ENCODE measurements at regions of chr2 and their contacts with region 1.

Region 1: DNA sequence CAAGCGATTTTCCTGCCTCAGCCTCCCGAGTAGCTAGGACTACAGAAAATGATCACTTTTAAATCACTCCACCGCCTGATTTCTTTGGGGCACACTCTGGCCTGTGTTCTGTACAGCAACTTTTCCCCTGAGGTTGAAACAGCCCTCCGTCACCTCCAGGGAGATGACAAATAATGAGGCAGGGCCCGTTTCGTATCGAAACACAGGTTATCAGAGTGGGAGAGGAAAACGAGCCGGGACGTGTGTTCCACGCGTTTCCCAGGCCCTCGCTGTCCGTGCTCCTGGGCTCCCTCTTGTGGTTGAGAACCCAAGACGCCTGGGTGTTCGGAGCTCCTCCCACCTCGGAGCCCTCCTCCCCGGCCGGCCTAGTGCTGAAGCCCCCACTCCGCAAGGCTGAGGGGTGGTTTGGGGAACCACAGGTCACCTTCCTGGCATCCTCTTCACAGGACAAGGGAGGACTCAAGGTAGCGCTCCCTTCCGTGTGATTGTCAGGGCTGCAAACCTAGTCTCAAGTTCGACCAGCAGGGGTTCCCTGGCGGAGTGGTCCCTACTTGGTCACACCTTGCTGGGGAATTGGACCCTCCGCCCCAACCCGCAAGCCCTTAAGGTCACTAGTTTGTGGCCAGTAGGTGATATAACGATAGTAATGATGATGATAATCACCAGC is 12.8 kb downstream of the ATP6V1B1 start:
- DNase-seq: peak; percentile 78
- H3K4me3 ChIP-seq: peak overlapping the region in 2 of 3 experiments; percentile 26 to 36
- H3K27ac ChIP-seq: no peak overlapping the region
- H3K4me1 ChIP-seq: peaks cover 13% of the 10 kb centered on the region
- H3K27me3 ChIP-seq: peaks cover 4 to 9% of the 10 kb centered on the region in 2 experiments
- CTCF ChIP-seq: peak; percentile 90 to 94
- POLR2A ChIP-seq: no peak

Region 2: GRCh38 chr2:70301344-70302194 is 646.9 kb before region 1 on chr2 and contains the start of gene FAM136A:
- CTCF ChIA-PET with region 1: interaction called, 26 read pairs
- POLR2A ChIA-PET with region 1: no interaction called
- dilution Hi-C with region 1: no loop called
- intact Hi-C with region 1: loop called (anchors 5 kb)
- DNase-seq: peak; percentile 80
- H3K4me3 ChIP-seq: peak within 1 kb of the TSS; percentile 52 to 90 (median 62)
- H3K27ac ChIP-seq: peak within 1 kb of the TSS; percentile 6
- H3K4me1 ChIP-seq: peaks cover 5% of the 10 kb centered on the region
- H3K27me3 ChIP-seq: no peaks in the 10 kb centered on the region
- CTCF ChIP-seq: peak; percentile 70 to 97
- POLR2A ChIP-seq: peak; percentile 93
- total RNA-seq, gene FAM136A: 42.4 and 45.7 TPM in 2 replicates

Region 3: GRCh38 chr2:70716131-70716743 is 232.2 kb before region 1 on chr2:
- CTCF ChIA-PET with region 1: no interaction called
- POLR2A ChIA-PET with region 1: no interaction called
- dilution Hi-C with region 1: no loop called
- intact Hi-C with region 1: no loop called
- DNase-seq: no peak
- H3K4me3 ChIP-seq: no peak overlapping the region
- H3K27ac ChIP-seq: no peak overlapping the region
- H3K4me1 ChIP-seq: no peaks in the 10 kb centered on the region
- H3K27me3 ChIP-seq: peaks cover 0 to 15% of the 10 kb centered on the region in 2 experiments
- CTCF ChIP-seq: no peak
- POLR2A ChIP-seq: no peak

Region 4: DNA sequence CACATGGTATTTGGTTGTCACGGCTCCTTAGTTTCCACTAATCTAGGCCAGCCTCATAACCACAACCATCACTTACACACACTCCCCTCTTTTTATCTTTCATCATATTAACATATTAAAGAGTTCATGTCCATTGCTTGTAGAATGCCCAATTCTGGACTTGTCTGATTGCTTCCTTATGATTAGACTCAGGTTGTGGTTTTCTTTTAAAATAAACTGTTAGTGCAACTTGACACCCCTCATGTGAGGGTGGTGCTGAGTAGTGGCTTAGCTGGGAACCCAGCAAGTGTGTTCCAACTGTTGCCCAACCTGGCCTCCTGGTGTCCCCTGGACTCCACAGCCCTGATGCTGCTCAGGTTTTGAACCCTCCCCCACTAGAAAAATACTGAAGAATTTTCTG is 92.8 kb before region 1 on chr2:
- CTCF ChIA-PET with region 1: interaction called, 17 read pairs
- POLR2A ChIA-PET with region 1: no interaction called
- dilution Hi-C with region 1: no loop called
- intact Hi-C with region 1: no loop called
- DNase-seq: no peak
- H3K4me3 ChIP-seq: no peak overlapping the region
- H3K27ac ChIP-seq: no peak overlapping the region
- H3K4me1 ChIP-seq: no peaks in the 10 kb centered on the region
- H3K27me3 ChIP-seq: peaks cover 21 to 39% of the 10 kb centered on the region in 2 experiments
- CTCF ChIP-seq: no peak
- POLR2A ChIP-seq: no peak

Region 5: DNA sequence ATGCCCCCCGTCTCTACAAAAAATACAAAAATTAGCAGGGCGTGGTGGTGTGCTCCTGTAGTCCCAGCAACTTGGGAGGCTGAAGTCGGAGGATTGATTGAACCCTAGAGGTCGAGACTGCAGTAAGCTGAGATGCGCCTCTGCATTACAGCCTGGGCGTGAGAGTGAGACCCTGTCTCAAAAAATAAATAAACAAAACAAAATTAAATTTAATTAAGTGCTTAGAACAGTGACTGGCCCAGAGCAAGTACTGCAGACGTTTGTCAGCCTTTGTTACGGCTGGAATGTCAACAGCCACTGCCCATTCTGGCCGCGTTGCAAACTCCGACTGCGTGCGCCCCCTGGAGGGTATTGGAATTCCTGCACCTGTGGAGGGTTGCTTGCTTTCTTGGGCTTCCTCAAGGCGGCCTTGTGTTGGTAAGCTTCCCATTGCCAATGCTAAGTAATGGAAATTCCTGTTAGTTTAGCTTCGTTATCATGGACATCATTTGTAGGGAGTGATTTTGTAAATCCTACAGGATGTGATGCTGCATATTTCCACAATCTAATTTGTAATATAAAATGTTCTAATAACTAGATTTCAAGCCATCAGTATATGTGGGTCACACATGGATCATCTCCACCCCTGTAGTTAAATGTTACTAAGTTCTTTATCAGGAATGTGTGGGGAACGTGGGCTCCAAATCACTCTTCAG is 28.7 kb before region 1 on chr2:
- CTCF ChIA-PET with region 1: interaction called, 36 read pairs
- POLR2A ChIA-PET with region 1: no interaction called
- dilution Hi-C with region 1: no loop called
- intact Hi-C with region 1: loop called (anchors 1 kb)
- DNase-seq: peak; percentile 88
- H3K4me3 ChIP-seq: no peak overlapping the region
- H3K27ac ChIP-seq: no peak overlapping the region
- H3K4me1 ChIP-seq: peaks cover 16% of the 10 kb centered on the region
- H3K27me3 ChIP-seq: peaks cover 8 to 10% of the 10 kb centered on the region in 2 experiments
- CTCF ChIP-seq: peak; percentile 93 to 96
- POLR2A ChIP-seq: no peak

Region 6: GRCh38 chr2:70964596-70965386 is 16.3 kb after region 1 on chr2:
- CTCF ChIA-PET with region 1: interaction called, 84 read pairs
- POLR2A ChIA-PET with region 1: interaction called, 3 read pairs
- dilution Hi-C with region 1: no loop called
- intact Hi-C with region 1: no loop called
- DNase-seq: peak; percentile 56
- H3K4me3 ChIP-seq: peak overlapping the region; percentile 19 to 37 (median 24)
- H3K27ac ChIP-seq: no peak overlapping the region
- H3K4me1 ChIP-seq: peaks cover 2% of the 10 kb centered on the region
- H3K27me3 ChIP-seq: peaks cover 20 to 30% of the 10 kb centered on the region in 2 experiments
- CTCF ChIP-seq: peak; percentile 88 to 90
- POLR2A ChIP-seq: no peak

Region 7: GRCh38 chr2:71000780-71001591 is 52.5 kb after region 1 on chr2:
- CTCF ChIA-PET with region 1: interaction called, 14 read pairs
- POLR2A ChIA-PET with region 1: no interaction called
- dilution Hi-C with region 1: no loop called
- intact Hi-C with region 1: no loop called
- DNase-seq: peak; percentile 43
- H3K4me3 ChIP-seq: no peak overlapping the region
- H3K27ac ChIP-seq: no peak overlapping the region
- H3K4me1 ChIP-seq: no peaks in the 10 kb centered on the region
- H3K27me3 ChIP-seq: peaks cover 4 to 5% of the 10 kb centered on the region in 2 experiments
- CTCF ChIP-seq: peak; percentile 95 to 97
- POLR2A ChIP-seq: no peak

Measured in endothelial cell of umbilical vein (primary cell).